ENCODE measurements at regions of chr7 and their contacts with region 1.

Region 1: GRCh38 chr7:43729214-43729923 is at the start of gene COA1:
- DNase-seq: peak; percentile 90
- H3K4me3 Mint-ChIP-seq: peak within 1 kb of the TSS; percentile 91
- H3K27ac Mint-ChIP-seq: peak within 1 kb of the TSS; percentile 75
- H3K4me1 Mint-ChIP-seq: peaks cover 32% of the 10 kb centered on the region
- H3K27me3 Mint-ChIP-seq: no peaks in the 10 kb centered on the region
- CTCF ChIP-seq: no peak
- total RNA-seq, gene COA1: 101 and 109 TPM in 2 replicates

Region 2: DNA sequence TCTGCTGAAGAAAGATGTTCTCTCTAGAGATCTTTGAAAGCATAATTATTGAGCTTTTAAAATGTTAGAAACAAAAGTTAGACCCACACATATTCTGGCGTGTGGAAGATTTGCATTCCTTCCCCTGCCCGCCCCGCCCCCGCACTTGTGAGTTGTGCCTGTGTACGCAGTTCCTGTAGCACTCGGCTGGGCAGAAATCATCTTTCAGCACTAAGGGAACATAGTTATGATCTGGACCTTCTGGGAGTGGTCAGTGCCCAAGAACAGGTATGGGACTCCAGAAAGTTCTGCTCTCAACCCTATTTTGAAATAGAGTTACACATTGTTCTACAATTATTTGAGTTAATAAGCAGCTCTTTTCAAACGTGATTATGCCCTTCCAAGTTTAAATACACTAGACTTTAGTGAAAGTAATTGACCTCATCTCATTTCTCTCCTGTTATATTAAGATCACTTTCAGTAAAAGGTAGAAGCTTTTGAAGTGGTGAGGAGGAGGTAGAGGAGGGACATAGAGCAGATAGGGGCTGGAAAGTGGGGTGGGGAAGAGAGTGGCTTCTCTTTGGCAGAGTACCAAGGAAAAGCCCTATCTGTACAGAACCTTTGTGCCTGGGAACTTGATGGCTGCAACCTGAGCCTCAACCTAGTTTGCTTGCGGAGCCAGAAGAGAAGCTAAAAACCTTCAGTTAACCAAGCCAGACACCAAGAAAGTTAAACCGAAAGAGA is 34.8 kb after region 1 on chr7:
- CTCF ChIA-PET with region 1: interaction called, 6 read pairs
- intact Hi-C with region 1: loop called (anchors 5 kb)
- DNase-seq: peak; percentile 46
- H3K4me3 Mint-ChIP-seq: peak overlapping the region; percentile 64
- H3K27ac Mint-ChIP-seq: peak overlapping the region; percentile 59
- H3K4me1 Mint-ChIP-seq: peaks cover 52% of the 10 kb centered on the region
- H3K27me3 Mint-ChIP-seq: no peaks in the 10 kb centered on the region
- CTCF ChIP-seq: no peak

Region 3: DNA sequence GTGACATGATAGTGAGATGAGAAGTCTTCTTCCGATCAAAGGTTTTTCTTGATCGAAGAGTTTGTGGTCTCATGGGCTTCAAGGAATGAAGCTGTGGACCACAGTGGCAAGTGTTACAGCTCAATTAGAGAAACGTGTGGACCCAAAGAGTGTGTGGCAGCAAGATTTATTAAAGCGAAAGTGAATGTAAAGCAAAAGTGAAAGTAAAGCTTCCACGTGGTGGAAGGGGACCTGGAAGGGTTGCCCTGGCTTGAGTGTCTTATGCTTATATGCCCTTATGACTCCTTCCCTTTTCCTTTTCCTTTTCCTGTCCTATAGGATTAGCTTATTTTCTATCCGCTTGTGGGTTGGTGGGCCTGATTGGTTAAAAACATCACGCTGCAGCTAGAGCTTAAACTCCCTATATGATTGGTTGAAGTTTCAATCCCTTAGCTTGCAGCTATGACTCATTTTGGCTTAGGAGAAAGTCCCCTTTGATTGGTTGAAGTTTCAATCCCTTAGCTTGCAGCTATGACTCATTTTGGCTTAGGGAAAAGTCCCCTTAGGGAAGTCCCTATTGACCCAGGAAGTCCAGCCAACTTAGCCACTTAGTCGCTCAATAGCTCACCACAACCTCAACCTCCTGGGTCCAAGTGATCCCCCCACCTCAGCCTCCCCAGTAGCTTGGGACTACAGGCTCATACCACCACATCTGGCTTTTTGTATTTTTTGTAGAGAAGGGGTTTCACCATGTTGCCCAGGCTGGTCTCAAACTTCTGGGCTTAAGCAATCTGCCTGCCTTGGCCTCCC is 105.3 kb after region 1 on chr7:
- CTCF ChIA-PET with region 1: no interaction called
- intact Hi-C with region 1: loop called (anchors 2 kb)
- DNase-seq: no peak
- H3K4me3 Mint-ChIP-seq: peak overlapping the region; percentile 15
- H3K27ac Mint-ChIP-seq: peak overlapping the region; percentile 40
- H3K4me1 Mint-ChIP-seq: peaks cover 27% of the 10 kb centered on the region
- H3K27me3 Mint-ChIP-seq: no peaks in the 10 kb centered on the region
- CTCF ChIP-seq: no peak

Measured in Calu3 (cell line).